Heart left ventricle (tissue), 16 donors: ENCODE measurements at regions of chr18 and their contacts with region 1.

Region 1: GRCh38 chr18:53909668-53910067 is 314.8 kb downstream of the MBD2 start:
- DNase-seq: no peak
- ATAC-seq: no peak
- H3K4me3 ChIP-seq: no peak overlapping the region
- H3K27ac ChIP-seq: no peak overlapping the region
- H3K4me1 ChIP-seq: peaks cover 0 to 9% (median 0%) of the 10 kb centered on the region in 12 donors
- H3K27me3 ChIP-seq: no peaks in the 10 kb centered on the region
- CTCF ChIP-seq: peak in 8 of 12 donors; percentile 11 to 48 (median 25)
- POLR2A ChIP-seq: no peak

Region 2: GRCh38 chr18:54033052-54033451 is 123.4 kb after region 1 on chr18:
- intact Hi-C with region 1: loop called in 1 of 10 experiments (anchors 5 kb)
- DNase-seq: no peak
- ATAC-seq: no peak
- H3K4me3 ChIP-seq: no peak overlapping the region
- H3K27ac ChIP-seq: no peak overlapping the region
- H3K4me1 ChIP-seq: peaks cover 0 to 7% (median 0%) of the 10 kb centered on the region in 12 donors
- H3K27me3 ChIP-seq: no peaks in the 10 kb centered on the region
- CTCF ChIP-seq: no peak
- POLR2A ChIP-seq: no peak